Heart right ventricle (tissue), 16 donors: ENCODE measurements at regions of chr3 and their contacts with region 1.

Region 1: DNA sequence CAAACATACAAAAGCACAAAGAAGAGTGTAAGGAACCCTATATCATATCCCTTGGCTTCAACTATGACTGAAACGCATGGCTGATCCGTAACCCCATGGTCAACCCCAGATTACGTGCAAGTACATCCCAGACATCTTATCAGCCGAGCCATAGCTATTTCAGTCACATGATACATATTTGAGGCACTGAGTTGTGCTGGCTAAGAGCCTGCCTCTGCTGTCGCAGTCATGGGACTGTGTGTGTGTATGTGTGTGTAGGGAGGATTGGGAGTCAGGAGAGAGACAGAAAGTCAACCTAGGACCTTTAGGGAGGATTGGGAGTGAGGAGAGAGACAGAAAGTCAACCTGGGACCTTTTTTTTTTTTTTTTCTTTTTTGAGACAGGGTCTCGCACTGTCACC is 8.4 kb downstream of the ST6GAL1 start:
- DNase-seq: peak; percentile 25 to 70
- ATAC-seq: peak; percentile 72 to 88 (median 84)
- H3K4me3 ChIP-seq: no peak overlapping the region
- H3K27ac ChIP-seq: peak overlapping the region; percentile 52 to 89 (median 79)
- H3K4me1 ChIP-seq: peaks cover 22 to 84% (median 66%) of the 10 kb centered on the region in 9 donors
- H3K27me3 ChIP-seq: no peaks in the 10 kb centered on the region
- CTCF ChIP-seq: no peak

Region 2: GRCh38 chr3:186976837-186977750 is 38.4 kb after region 1 on chr3:
- intact Hi-C with region 1: loop called in 4 of 10 experiments (anchors 2 to 5 kb)
- DNase-seq: peak; percentile 65 to 79
- ATAC-seq: peak; percentile 84 to 92 (median 88)
- H3K4me3 ChIP-seq: peak overlapping the region in 5 of 10 donors; percentile 3 to 28 (median 15)
- H3K27ac ChIP-seq: peak overlapping the region; percentile 62 to 94 (median 88)
- H3K4me1 ChIP-seq: peaks cover 3 to 65% (median 55%) of the 10 kb centered on the region in 9 donors
- H3K27me3 ChIP-seq: no peaks in the 10 kb centered on the region
- CTCF ChIP-seq: peak in 4 of 9 donors; percentile 8 to 22 (median 16)